Sigmoid colon (tissue), 7 donors: ENCODE measurements at regions of chr3 and their contacts with region 1.

Region 1: DNA sequence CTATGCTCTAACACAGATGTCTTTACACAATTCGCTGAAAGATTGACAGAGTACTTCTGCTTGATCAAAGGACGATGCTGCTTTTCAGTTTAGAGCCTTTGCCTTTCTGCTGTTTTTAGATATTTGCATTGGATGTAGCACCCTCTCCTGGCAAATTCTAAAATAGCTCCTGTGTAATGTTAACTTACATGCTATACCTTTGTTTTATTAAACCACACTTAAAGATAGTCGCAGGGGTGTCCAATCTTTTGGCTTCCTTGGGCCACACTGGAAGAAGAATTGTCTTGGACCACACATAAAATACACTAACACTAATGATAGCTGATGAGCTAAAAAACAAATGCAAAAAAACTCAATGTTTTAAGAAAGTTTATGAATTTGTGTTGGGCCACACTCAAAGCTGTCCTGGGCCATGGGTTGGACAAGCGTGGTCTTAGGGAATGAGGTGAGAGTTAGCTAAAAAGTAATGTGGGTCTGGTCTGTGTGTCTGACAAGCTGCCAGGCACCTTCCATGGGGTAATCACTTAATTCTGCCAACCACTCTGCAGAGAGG is 62.9 kb downstream of the ATG7 start:
- DNase-seq: no peak
- H3K4me3 ChIP-seq: no peak overlapping the region
- H3K27ac ChIP-seq: no peak overlapping the region
- H3K4me1 ChIP-seq: no peaks in the 10 kb centered on the region
- H3K27me3 ChIP-seq: no peaks in the 10 kb centered on the region
- CTCF ChIP-seq: peak; percentile 45 to 71 (median 68)
- EP300 ChIP-seq: no peak
- POLR2A ChIP-seq: no peak

Region 2: DNA sequence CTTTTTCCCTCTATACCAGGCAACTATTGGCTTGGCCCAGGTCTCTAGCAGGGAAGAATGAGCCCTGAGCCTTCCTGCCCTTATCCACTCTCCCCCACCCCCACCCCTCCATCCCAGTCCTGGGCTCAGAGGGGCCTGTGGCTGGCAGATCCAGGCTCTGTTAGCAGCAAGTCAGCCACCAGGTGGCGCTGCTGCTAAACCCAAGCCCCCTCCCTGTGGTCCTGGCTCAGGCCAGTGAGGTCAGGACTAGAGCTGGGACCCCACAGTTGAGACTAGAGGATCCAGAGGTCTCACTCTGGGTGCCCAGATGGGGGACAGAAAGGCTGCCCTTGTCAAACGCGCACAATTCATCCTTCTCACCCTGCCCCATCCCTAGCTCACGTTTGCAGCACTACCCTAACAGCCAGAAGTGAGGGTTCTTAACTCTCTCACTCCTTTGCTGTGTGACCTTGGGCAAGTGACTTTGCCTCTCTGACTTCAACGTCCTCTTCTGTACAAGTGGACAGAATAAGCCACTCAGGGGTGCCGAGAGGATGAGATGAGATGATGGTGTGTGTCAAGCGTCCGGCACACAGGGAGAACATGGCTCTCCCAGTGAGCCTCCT is 389.3 kb before region 1 on chr3:
- intact Hi-C with region 1: loop called (anchors 10 kb)
- DNase-seq: peak; percentile 65
- H3K4me3 ChIP-seq: no peak overlapping the region
- H3K27ac ChIP-seq: no peak overlapping the region
- H3K4me1 ChIP-seq: no peaks in the 10 kb centered on the region
- H3K27me3 ChIP-seq: no peaks in the 10 kb centered on the region
- CTCF ChIP-seq: peak; percentile 55 to 89 (median 76)
- EP300 ChIP-seq: no peak
- POLR2A ChIP-seq: no peak

Region 3: GRCh38 chr3:11211531-11212298 is 123.4 kb before region 1 on chr3:
- intact Hi-C with region 1: no loop called
- DNase-seq: peak; percentile 55
- H3K4me3 ChIP-seq: no peak overlapping the region
- H3K27ac ChIP-seq: peak overlapping the region in 3 of 4 donors; percentile 75 to 91 (median 80)
- H3K4me1 ChIP-seq: peaks cover 0 to 62% (median 45%) of the 10 kb centered on the region in 4 donors
- H3K27me3 ChIP-seq: no peaks in the 10 kb centered on the region
- CTCF ChIP-seq: peak in 1 of 4 experiments; percentile 16
- EP300 ChIP-seq: no peak
- POLR2A ChIP-seq: no peak

Region 4: DNA sequence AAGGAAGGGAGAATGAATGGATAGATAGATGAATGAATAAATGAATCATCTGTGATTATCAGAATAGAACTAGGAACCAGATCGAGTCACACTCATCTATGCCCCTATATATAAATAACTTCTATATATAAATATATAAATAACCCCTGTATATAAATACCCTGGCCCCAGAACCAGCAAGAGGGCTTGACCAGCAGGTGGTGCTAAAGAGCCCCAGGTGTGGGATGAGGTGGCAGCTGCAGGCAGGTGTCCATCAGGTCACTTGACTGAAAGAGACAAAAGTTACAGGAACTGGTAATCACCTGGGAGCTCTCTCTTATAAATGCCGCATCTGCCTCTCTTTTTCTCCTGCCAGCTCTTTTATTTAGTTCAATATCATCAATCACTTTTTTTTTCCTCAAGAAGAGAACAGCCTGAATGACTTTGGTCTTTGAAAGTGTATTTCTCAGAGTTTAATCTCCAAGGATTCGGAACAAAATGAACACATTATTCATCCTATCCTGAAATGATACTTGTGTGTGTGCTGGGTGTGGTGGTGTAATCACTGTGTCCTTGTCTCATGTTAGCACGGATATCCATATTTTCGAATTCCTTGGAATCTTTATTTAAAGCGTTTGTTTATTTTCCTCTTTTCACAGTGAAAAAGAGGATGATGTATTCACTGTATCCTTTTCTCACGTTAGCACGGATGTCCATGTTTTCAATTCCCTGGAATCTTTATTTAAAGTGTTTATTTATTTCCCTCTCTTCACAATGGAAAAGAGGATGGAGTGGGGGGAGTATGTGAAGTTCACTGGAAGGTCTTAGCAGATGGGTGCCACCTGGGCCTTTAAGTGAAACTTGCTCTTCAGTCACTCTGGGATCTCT is 98.3 kb before region 1 on chr3:
- intact Hi-C with region 1: loop called (anchors 10 kb)
- DNase-seq: no peak
- H3K4me3 ChIP-seq: no peak overlapping the region
- H3K27ac ChIP-seq: no peak overlapping the region
- H3K4me1 ChIP-seq: no peaks in the 10 kb centered on the region
- H3K27me3 ChIP-seq: no peaks in the 10 kb centered on the region
- CTCF ChIP-seq: peak in 2 of 4 experiments; percentile 41 to 59
- EP300 ChIP-seq: no peak
- POLR2A ChIP-seq: no peak